ENCODE measurements at regions of chr2 and their contacts with region 1.

Region 1: GRCh38 chr2:63819765-63820717 is 21.7 kb upstream of the UGP2 start:
- DNase-seq: peak; percentile 66
- H3K4me3 ChIP-seq: peak overlapping the region; percentile 10
- H3K27ac ChIP-seq: peak overlapping the region; percentile 67
- H3K4me1 ChIP-seq: peaks cover 80% of the 10 kb centered on the region
- CTCF ChIP-seq: no peak

Region 2: DNA sequence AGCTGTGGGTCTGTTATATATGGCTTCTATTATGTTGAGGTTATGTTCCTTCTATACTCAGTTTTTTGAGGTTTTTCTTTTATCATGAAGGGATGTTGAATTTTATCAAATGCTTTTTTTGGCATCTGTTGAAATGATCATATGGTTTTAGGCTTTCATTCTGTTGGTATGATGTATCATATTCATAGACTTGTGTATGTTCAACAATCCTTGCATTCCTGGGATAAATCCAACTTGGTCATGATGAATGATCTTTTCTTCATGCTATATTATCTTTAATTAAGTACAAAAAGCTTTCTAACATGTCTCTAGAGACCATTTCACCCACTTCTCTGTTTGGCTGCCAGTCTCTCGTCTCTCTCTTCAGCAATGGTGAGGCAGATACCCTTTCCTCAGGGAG is 177.1 kb before region 1 on chr2:
- CTCF ChIA-PET with region 1: no interaction called
- POLR2A ChIA-PET with region 1: no interaction called
- intact Hi-C with region 1: no loop called
- DNase-seq: no peak
- H3K4me3 ChIP-seq: no peak overlapping the region
- H3K27ac ChIP-seq: no peak overlapping the region
- H3K4me1 ChIP-seq: no peaks in the 10 kb centered on the region
- CTCF ChIP-seq: no peak

Region 3: GRCh38 chr2:63834401-63834800 is 14.4 kb after region 1 on chr2:
- CTCF ChIA-PET with region 1: interaction called, 3 read pairs
- POLR2A ChIA-PET with region 1: interaction called, 12 read pairs
- intact Hi-C with region 1: no loop called
- DNase-seq: no peak
- H3K4me3 ChIP-seq: no peak overlapping the region
- H3K27ac ChIP-seq: no peak overlapping the region
- H3K4me1 ChIP-seq: peaks cover 26% of the 10 kb centered on the region
- CTCF ChIP-seq: no peak

Region 4: DNA sequence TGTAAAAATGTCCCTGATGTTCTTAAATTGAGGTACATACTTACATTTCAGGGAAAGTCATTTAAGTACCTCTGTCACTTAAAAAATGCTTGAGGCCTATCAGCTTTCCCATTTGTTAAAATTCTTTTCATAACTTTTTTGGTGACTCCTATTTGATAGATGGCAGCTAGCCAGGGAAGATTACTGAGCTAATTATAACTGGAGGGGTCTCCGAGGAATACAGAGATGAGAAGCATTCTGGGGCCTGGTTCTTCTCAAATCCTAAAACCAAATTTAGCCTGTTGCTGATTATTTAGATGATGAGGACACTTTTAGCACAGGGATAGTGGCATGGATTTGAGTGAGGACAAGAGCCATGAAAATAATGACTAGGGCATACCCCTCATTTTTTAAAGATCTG is 26.4 kb after region 1 on chr2:
- CTCF ChIA-PET with region 1: no interaction called
- POLR2A ChIA-PET with region 1: interaction called, 35 read pairs
- intact Hi-C with region 1: no loop called
- DNase-seq: no peak
- H3K4me3 ChIP-seq: no peak overlapping the region
- H3K27ac ChIP-seq: no peak overlapping the region
- H3K4me1 ChIP-seq: peaks cover 26% of the 10 kb centered on the region
- CTCF ChIP-seq: no peak

Measured in OCI-LY7 (cell line).